PC-9 (cell line): ENCODE measurements at regions of chr3 and their contacts with region 1.

Region 1: DNA sequence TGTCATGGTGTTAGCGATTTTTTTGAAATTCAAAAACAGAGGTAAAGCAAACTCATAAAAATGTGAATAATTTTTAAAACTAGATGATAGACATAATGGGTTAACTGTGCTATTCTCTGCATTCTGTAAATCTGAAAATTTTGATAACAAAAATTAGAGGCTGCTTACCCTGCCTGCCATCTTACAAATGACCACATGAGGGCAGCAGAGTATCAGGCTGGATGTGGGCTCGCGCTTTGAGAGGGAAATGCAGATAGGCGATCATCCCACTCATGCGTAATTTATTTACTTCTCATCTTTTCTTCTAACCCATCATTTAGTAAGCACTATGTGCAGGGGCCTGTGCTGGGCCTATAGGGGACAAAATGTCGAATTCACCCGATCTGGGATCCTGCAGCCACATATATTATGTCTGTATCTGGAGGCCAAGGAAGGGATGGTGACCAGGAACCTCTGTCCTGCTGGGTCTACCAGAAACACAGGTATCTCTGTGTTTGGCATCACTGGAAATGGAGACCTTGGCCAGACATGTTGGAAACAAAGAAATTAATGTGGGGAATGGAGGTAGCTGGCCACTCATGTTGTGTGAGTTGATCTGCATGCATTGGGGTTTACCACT is 7.8 kb upstream of the RAD18 start:
- DNase-seq: peak; percentile 38 to 65
- H3K4me3 ChIP-seq: no peak overlapping the region
- H3K27ac ChIP-seq: no peak overlapping the region
- H3K4me1 ChIP-seq: no peaks in the 10 kb centered on the region
- H3K27me3 ChIP-seq: no peaks in the 10 kb centered on the region
- CTCF ChIP-seq: peak; percentile 98

Region 2: GRCh38 chr3:8610951-8611350 is 360.1 kb before region 1 on chr3:
- CTCF ChIA-PET with region 1: no interaction called
- POLR2A ChIA-PET with region 1: no interaction called
- intact Hi-C with region 1: no loop called
- DNase-seq: no peak
- H3K4me3 ChIP-seq: no peak overlapping the region
- H3K27ac ChIP-seq: no peak overlapping the region
- H3K4me1 ChIP-seq: no peaks in the 10 kb centered on the region
- H3K27me3 ChIP-seq: no peaks in the 10 kb centered on the region
- CTCF ChIP-seq: no peak

Region 3: GRCh38 chr3:9067352-9067975 is 96.4 kb after region 1 on chr3:
- CTCF ChIA-PET with region 1: no interaction called
- POLR2A ChIA-PET with region 1: no interaction called
- intact Hi-C with region 1: loop called (anchors 2 kb)
- DNase-seq: peak in 1 of 2 experiments; percentile 33
- H3K4me3 ChIP-seq: no peak overlapping the region
- H3K27ac ChIP-seq: no peak overlapping the region
- H3K4me1 ChIP-seq: no peaks in the 10 kb centered on the region
- H3K27me3 ChIP-seq: no peaks in the 10 kb centered on the region
- CTCF ChIP-seq: peak; percentile 96